IMR-90 (cell line): ENCODE measurements at regions of chr5 and their contacts with region 1.

Region 1: DNA sequence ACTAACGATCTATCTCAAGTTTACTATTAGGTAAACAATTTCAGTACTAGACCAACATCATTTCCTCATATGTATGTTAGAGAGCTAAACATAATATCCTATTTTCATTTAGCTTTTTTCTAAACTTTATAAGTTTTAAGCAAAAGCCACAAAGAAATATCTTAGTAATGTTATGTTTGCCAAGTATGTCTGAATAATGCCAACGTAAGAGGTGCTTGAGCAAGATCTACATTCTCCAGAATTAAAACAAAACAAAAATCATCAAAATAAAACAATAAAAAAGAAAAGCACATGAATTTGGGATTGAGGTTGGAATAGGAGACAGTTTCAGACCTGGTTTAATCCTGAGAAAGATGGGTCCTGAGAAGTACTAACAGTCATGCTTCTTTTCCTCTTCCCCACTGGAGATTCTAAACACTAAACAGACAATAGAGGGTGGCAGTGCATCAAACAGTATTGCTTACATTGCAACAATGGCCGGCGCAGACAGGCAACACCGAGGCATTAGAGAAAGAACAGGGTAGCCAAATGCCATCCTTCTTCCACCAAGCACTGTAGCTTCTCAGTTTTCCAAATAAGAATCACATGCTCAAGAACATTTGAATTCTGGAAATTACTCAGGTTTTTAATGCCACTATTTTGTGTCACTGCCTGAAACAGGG is 33.6 kb downstream of the CSNK1A1 start:
- DNase-seq: peak; percentile 23
- ATAC-seq: peak; percentile 12
- H3K4me3 ChIP-seq: no peak overlapping the region
- H3K27ac ChIP-seq: peak overlapping the region; percentile 84; the same call in 1 of the 2 replicates
- H3K4me1 ChIP-seq: peaks cover 14% of the 10 kb centered on the region
- H3K27me3 ChIP-seq: no peaks in the 10 kb centered on the region
- CTCF ChIP-seq: no peak
- POLR2A ChIP-seq: no peak
- RAD21 ChIP-seq: no peak

Region 2: GRCh38 chr5:149503006-149503405 is 14.6 kb before region 1 on chr5:
- CTCF ChIA-PET with region 1: interaction called, 6 read pairs
- POLR2A ChIA-PET with region 1: no interaction called
- dilution Hi-C with region 1: no loop called
- in situ Hi-C with region 1: no loop called
- intact Hi-C with region 1: loop called (anchors 2 kb)
- DNase-seq: no peak
- ATAC-seq: no peak
- H3K4me3 ChIP-seq: no peak overlapping the region
- H3K27ac ChIP-seq: peak overlapping the region; percentile 29; the same call in 1 of the 2 replicates
- H3K4me1 ChIP-seq: peaks cover 12% of the 10 kb centered on the region
- H3K27me3 ChIP-seq: no peaks in the 10 kb centered on the region
- CTCF ChIP-seq: no peak
- POLR2A ChIP-seq: no peak
- RAD21 ChIP-seq: no peak

Region 3: GRCh38 chr5:149551200-149552037 is 33.8 kb after region 1 on chr5 and contains the start of gene CSNK1A1:
- CTCF ChIA-PET with region 1: interaction called, 6 read pairs
- POLR2A ChIA-PET with region 1: no interaction called
- dilution Hi-C with region 1: no loop called
- in situ Hi-C with region 1: no loop called
- intact Hi-C with region 1: loop called (anchors 5 kb)
- DNase-seq: peak; percentile 98
- ATAC-seq: peak; percentile 93
- H3K4me3 ChIP-seq: peak within 1 kb of the TSS; percentile 81
- H3K27ac ChIP-seq: peak within 1 kb of the TSS; percentile 100
- H3K4me1 ChIP-seq: no peaks in the 10 kb centered on the region; the same call in 1 of the 2 replicates
- H3K27me3 ChIP-seq: no peaks in the 10 kb centered on the region
- CTCF ChIP-seq: peak; percentile 77
- POLR2A ChIP-seq: peak; percentile 98
- RAD21 ChIP-seq: peak; percentile 77
- total RNA-seq, gene CSNK1A1: 419 and 573 TPM in 2 replicates